ENCODE measurements at regions of chr2 and their contacts with region 1.

Region 1: GRCh38 chr2:227479865-227480475 is 8.0 kb downstream of the AGFG1 start:
- DNase-seq: peak in 3 of 14 experiments; percentile 39 to 45 (median 43)
- ATAC-seq: peak; percentile 75
- H3K4me3 ChIP-seq: no peak overlapping the region
- H3K4me3 Mint-ChIP-seq: peak overlapping the region; percentile 13
- H3K27ac ChIP-seq: no peak overlapping the region
- H3K27ac Mint-ChIP-seq: peak overlapping the region; percentile 38
- H3K4me1 ChIP-seq: peaks cover 12% of the 10 kb centered on the region
- H3K4me1 Mint-ChIP-seq: peaks cover 81% of the 10 kb centered on the region
- H3K27me3 ChIP-seq: no peaks in the 10 kb centered on the region
- H3K27me3 Mint-ChIP-seq: no peaks in the 10 kb centered on the region
- CTCF ChIP-seq: peak; percentile 36

Region 2: GRCh38 chr2:227415538-227416424 is 64.2 kb before region 1 on chr2:
- CTCF ChIA-PET with region 1: no interaction called
- POLR2A ChIA-PET with region 1: no interaction called
- intact Hi-C with region 1: no loop called
- DNase-seq: peak in 2 of 14 experiments; percentile 27 to 29
- ATAC-seq: no peak
- H3K4me3 ChIP-seq: no peak overlapping the region
- H3K4me3 Mint-ChIP-seq: no peak overlapping the region
- H3K27ac ChIP-seq: no peak overlapping the region
- H3K27ac Mint-ChIP-seq: no peak overlapping the region
- H3K4me1 ChIP-seq: peaks cover 7% of the 10 kb centered on the region
- H3K4me1 Mint-ChIP-seq: peaks cover 17% of the 10 kb centered on the region
- H3K27me3 ChIP-seq: no peaks in the 10 kb centered on the region
- H3K27me3 Mint-ChIP-seq: no peaks in the 10 kb centered on the region
- CTCF ChIP-seq: no peak

Region 3: DNA sequence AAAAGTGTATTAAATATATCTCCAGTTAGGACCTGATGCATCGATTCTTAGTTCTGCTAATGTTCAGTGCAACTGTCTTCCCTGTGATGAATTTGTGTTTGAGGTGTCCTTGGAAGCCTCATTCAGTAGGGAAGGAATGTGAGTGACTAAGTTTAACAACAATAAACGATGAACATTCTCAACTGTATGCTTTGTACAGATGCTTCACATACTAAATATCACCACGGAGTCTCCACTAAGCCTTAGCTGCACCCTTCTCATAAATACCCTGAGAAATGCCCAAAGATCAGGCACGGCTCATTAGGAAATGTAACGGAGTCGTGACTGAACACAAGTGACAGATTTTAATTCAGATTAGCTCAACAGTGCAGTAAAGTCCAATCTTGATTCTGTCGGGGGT is 32.4 kb before region 1 on chr2:
- CTCF ChIA-PET with region 1: no interaction called
- POLR2A ChIA-PET with region 1: no interaction called
- intact Hi-C with region 1: no loop called
- DNase-seq: no peak
- ATAC-seq: no peak
- H3K4me3 ChIP-seq: no peak overlapping the region
- H3K4me3 Mint-ChIP-seq: no peak overlapping the region
- H3K27ac ChIP-seq: no peak overlapping the region
- H3K27ac Mint-ChIP-seq: no peak overlapping the region
- H3K4me1 ChIP-seq: no peaks in the 10 kb centered on the region
- H3K4me1 Mint-ChIP-seq: no peaks in the 10 kb centered on the region
- H3K27me3 ChIP-seq: no peaks in the 10 kb centered on the region
- H3K27me3 Mint-ChIP-seq: no peaks in the 10 kb centered on the region
- CTCF ChIP-seq: no peak

Region 4: GRCh38 chr2:227524665-227525064 is 44.7 kb after region 1 on chr2:
- CTCF ChIA-PET with region 1: no interaction called
- POLR2A ChIA-PET with region 1: no interaction called
- intact Hi-C with region 1: loop called in 1 of 2 experiments (anchors 5 kb)
- DNase-seq: no peak
- ATAC-seq: no peak
- H3K4me3 ChIP-seq: no peak overlapping the region
- H3K4me3 Mint-ChIP-seq: no peak overlapping the region
- H3K27ac ChIP-seq: no peak overlapping the region
- H3K27ac Mint-ChIP-seq: no peak overlapping the region
- H3K4me1 ChIP-seq: no peaks in the 10 kb centered on the region
- H3K4me1 Mint-ChIP-seq: peaks cover 46% of the 10 kb centered on the region
- H3K27me3 ChIP-seq: no peaks in the 10 kb centered on the region
- H3K27me3 Mint-ChIP-seq: no peaks in the 10 kb centered on the region
- CTCF ChIP-seq: no peak

Measured in CD4-positive, alpha-beta T cell (primary cell).